MCF 10A (cell line): ENCODE measurements at regions of chr22 and their contacts with region 1.

Region 1: DNA sequence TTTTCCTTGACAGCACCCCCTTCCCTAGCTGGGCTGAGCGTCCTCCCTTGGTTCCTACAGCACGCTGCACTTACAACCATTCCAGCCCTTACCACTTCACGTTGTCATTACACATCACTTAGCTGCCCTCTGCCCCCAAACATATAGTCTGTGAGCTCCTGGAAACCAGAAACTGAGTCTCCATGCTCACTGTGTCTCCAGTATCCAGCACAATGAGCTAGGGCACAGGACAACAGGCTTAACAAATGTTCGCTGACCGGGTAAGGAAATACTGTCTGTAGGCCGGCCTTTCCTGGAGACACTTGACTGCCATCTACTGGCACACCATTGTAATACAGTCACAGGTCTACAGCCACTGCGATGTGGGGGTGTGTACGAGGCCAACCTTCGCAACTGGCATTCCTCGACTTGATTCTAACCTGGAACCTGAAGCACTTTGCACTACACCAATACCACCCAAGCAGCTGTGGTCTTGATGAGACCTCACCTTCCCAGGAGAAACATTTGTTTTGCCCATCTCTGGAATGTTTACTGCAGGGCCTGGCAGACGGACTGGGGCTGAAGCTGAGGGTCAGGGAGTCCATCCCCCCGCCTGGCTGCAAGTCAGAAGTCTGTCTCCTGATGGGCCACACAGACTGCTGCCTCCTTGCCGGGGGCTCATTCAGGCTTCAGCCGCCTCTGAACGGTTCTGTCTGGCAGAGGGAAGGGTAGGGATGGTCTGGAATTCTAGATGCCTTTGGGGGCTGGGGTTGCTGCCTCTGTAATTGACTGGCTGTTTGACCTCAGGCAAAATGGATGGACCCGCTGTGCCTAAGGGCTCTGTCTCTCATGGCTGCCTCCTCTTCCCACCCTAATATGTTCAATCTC is 72.0 kb downstream of the SYN3 start:
- DNase-seq: peak; percentile 87
- H3K4me3 Mint-ChIP-seq: peak overlapping the region; percentile 32
- H3K27ac Mint-ChIP-seq: peak overlapping the region; percentile 79
- H3K4me1 Mint-ChIP-seq: peaks cover 39% of the 10 kb centered on the region
- H3K27me3 Mint-ChIP-seq: no peaks in the 10 kb centered on the region
- CTCF ChIP-seq: peak; percentile 79

Region 2: GRCh38 chr22:32474635-32475467 is 511.3 kb before region 1 on chr22 and contains the start of gene FBXO7:
- CTCF ChIA-PET with region 1: interaction called, 4 read pairs
- POLR2A ChIA-PET with region 1: interaction called, 3 read pairs
- intact Hi-C with region 1: loop called (anchors 5 kb)
- DNase-seq: peak; percentile 89
- H3K4me3 Mint-ChIP-seq: peak within 1 kb of the TSS; percentile 98
- H3K27ac Mint-ChIP-seq: peak within 1 kb of the TSS; percentile 96
- H3K4me1 Mint-ChIP-seq: peaks cover 12% of the 10 kb centered on the region
- H3K27me3 Mint-ChIP-seq: no peaks in the 10 kb centered on the region
- CTCF ChIP-seq: peak; percentile 13
- total RNA-seq, gene FBXO7: 59.8 and 76.9 TPM in 2 replicates

Region 3: DNA sequence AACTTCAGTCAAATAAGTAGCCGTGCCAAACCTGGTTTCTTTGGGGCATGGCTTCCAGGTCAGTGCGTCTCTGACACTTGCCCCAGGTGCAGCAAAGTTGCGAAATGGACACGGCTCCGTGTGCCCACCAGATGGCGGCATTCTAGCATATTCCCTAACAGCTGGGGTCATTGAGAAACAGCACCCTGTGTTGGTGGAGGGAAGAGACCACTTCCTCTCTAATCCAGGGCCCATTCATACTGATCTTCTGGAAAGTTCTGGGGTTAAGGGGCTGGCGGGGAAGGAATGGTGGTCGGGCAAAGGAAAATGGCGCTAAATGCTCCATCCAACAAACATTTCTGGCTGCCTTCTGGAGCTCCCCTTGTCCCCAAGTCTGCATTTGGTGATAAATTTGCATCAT is 325.8 kb before region 1 on chr22:
- CTCF ChIA-PET with region 1: interaction called, 21 read pairs
- POLR2A ChIA-PET with region 1: interaction called, 4 read pairs
- intact Hi-C with region 1: loop called (anchors 1 kb)
- DNase-seq: peak; percentile 71
- H3K4me3 Mint-ChIP-seq: no peak overlapping the region
- H3K27ac Mint-ChIP-seq: no peak overlapping the region
- H3K4me1 Mint-ChIP-seq: peaks cover 7% of the 10 kb centered on the region
- H3K27me3 Mint-ChIP-seq: no peaks in the 10 kb centered on the region
- CTCF ChIP-seq: peak; percentile 93

Region 4: DNA sequence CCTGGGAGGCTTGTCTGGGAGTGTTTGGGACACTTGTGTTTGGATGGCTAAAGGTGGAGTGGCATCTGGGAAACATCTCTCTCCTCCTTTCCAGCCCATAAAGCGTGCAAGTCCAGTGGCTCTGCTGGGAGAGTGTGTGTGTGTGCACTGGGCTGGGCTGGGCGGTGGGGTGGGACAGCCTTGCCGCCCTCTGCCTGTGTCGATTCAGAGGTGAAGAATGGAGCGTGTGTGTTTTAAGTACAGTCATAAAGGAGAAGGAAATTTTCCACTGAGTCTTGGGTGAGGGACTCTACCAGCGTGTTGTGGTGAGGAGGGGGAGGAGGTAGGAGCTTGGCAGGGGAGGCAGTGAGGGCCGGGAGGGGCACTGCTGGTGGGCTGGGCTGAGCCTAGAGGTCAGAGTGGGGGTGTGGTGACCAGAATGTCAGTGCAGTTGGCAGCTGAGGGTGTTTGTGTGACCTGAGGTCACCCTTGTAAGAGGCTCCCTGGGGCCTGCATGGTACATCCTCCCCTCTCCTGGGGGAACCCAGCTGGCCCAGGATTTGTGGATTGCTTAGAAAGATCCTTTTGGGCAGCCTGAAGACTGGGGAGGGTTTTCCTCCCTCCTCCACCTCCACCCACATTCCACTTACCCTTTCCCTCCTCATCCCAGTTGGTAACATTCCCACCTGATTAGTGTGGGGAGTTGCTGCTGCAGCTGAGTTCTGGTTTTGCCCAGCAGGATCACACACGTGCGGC is 182.9 kb before region 1 on chr22:
- CTCF ChIA-PET with region 1: interaction called, 15 read pairs
- POLR2A ChIA-PET with region 1: interaction called, 12 read pairs
- intact Hi-C with region 1: loop called (anchors 1 kb)
- DNase-seq: peak; percentile 33
- H3K4me3 Mint-ChIP-seq: peak overlapping the region; percentile 80
- H3K27ac Mint-ChIP-seq: peak overlapping the region; percentile 63
- H3K4me1 Mint-ChIP-seq: peaks cover 25% of the 10 kb centered on the region
- H3K27me3 Mint-ChIP-seq: no peaks in the 10 kb centered on the region
- CTCF ChIP-seq: no peak

Region 5: GRCh38 chr22:32926600-32926999 is 59.5 kb before region 1 on chr22:
- CTCF ChIA-PET with region 1: interaction called, 8 read pairs
- POLR2A ChIA-PET with region 1: interaction called, 3 read pairs
- intact Hi-C with region 1: loop called (anchors 2 kb)
- DNase-seq: peak; percentile 50
- H3K4me3 Mint-ChIP-seq: no peak overlapping the region
- H3K27ac Mint-ChIP-seq: no peak overlapping the region
- H3K4me1 Mint-ChIP-seq: no peaks in the 10 kb centered on the region
- H3K27me3 Mint-ChIP-seq: no peaks in the 10 kb centered on the region
- CTCF ChIP-seq: peak; percentile 35

Region 6: DNA sequence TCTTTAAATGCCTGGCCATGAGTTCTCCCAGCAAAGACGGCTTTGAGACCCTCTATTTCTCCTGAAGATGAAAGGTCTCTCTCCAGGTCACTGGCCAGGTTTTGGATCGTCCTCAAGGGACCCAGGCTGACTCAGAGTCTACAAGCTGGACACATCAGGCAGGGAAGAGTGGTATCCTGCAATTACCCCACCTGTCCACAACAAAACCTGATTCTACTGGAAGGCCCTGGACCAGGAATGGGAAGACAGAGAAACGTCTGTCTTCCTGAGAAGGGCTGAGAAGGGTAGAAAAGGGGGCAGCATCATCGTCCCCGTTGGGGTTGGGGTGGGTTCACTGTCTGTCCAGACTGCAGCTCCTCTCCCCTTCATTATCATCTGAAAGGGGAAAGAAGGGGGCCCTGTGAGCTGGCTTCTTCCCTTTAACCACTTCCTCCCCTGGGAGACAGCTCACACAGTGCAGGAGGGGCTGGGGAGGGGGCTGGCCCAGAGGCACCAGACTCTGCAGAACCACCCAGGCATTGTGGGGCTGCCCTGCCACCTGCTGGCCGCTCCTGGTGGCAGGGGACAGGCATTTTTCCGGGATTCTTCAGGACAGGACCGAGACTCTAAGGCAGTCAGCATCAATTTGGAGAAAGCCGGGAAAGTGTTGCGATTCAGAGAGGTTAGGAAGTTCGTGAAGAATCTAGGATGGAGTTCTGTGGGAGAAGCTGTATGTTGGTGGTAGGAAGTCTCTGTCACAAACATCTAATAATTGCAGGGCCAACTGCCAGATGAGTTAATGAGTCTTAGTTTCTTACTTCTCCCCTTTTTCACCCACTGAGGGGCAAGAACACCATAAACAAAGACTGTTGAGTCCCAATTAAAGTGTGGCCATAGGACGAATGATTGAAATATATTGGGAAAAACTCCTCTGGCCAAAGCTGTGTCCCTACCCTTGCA is 14.5 kb after region 1 on chr22:
- CTCF ChIA-PET with region 1: interaction called, 30 read pairs
- POLR2A ChIA-PET with region 1: interaction called, 52 read pairs
- intact Hi-C with region 1: loop called (anchors 1 kb)
- DNase-seq: peak; percentile 65
- H3K4me3 Mint-ChIP-seq: no peak overlapping the region
- H3K27ac Mint-ChIP-seq: peak overlapping the region; percentile 99
- H3K4me1 Mint-ChIP-seq: peaks cover 53% of the 10 kb centered on the region
- H3K27me3 Mint-ChIP-seq: no peaks in the 10 kb centered on the region
- CTCF ChIP-seq: peak; percentile 90

Region 7: DNA sequence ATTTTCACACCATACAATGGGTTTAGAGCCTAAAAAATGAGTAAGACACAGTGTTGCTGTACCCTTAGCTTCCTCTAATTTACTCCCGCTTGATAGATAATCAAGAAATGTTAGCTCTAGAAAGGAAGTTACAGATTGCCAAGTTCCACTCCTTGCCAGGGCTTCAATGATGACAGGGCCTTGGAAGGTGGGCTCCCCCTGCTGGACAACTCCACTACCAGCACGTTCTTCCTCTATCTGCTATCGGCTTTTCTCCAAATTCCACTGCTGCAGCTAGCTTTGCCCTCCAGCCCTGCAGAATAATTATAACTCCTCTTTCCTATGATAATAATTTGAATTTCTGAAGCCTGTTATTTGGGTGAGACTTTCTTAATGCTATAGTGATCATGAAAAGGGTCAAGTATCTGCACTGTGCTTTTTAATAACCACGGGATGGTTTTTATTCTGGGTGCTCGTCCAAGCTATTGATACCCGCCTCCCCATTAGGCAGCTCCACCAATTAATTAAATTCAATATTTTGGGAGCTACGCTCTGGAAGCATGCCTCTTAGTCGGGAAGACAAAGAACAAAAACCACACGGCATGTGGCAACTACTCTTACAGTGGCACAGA is 63.1 kb after region 1 on chr22:
- CTCF ChIA-PET with region 1: interaction called, 10 read pairs
- POLR2A ChIA-PET with region 1: no interaction called
- intact Hi-C with region 1: no loop called
- DNase-seq: peak; percentile 75
- H3K4me3 Mint-ChIP-seq: no peak overlapping the region
- H3K27ac Mint-ChIP-seq: no peak overlapping the region
- H3K4me1 Mint-ChIP-seq: no peaks in the 10 kb centered on the region
- H3K27me3 Mint-ChIP-seq: peaks cover 24% of the 10 kb centered on the region
- CTCF ChIP-seq: peak; percentile 89